SK-N-SH (cell line): ENCODE measurements at regions of chr10 and their contacts with region 1.

Region 1: DNA sequence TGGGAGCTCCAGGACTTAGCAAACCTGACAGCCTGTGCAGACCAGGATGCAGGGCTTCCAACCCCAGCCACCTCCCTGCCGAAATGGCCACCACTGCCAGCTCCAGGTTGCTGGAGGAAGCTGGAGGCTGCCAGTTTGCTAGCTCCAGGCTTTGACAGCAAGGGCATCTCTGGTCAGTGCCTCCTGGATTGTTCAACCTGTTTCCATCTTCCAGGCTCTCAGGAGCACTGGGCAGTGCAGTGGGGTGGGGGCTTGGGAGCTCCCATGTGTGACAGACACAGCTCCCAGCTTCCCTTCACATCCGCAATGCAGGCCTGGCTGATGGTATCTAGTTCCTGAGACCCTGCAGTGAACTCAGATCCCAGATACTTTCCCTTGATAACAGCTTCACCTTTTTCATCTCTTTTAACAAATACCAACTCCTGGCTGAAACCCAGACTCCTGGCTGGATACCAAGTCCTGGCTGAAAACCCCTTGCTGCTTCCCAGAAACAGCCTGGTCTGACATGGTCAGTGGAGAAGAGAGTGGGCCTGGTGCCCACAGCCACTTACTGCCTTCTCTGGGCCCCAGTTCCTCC is 20.8 kb upstream of the RET start:
- DNase-seq: peak; percentile 87
- H3K4me3 ChIP-seq: no peak overlapping the region
- H3K27ac ChIP-seq: peak overlapping the region in 1 of 2 experiments; percentile 100; a peak in 2 of 4 replicates
- H3K4me1 ChIP-seq: peaks cover 0 to 77% of the 10 kb centered on the region in 2 experiments; a peak in 2 of 4 replicates
- H3K27me3 ChIP-seq: no peaks in the 10 kb centered on the region
- CTCF ChIP-seq: no peak
- EP300 ChIP-seq: peak in 1 of 2 experiments; percentile 100; a peak in 2 of 4 replicates
- RAD21 ChIP-seq: peak; percentile 35

Region 2: DNA sequence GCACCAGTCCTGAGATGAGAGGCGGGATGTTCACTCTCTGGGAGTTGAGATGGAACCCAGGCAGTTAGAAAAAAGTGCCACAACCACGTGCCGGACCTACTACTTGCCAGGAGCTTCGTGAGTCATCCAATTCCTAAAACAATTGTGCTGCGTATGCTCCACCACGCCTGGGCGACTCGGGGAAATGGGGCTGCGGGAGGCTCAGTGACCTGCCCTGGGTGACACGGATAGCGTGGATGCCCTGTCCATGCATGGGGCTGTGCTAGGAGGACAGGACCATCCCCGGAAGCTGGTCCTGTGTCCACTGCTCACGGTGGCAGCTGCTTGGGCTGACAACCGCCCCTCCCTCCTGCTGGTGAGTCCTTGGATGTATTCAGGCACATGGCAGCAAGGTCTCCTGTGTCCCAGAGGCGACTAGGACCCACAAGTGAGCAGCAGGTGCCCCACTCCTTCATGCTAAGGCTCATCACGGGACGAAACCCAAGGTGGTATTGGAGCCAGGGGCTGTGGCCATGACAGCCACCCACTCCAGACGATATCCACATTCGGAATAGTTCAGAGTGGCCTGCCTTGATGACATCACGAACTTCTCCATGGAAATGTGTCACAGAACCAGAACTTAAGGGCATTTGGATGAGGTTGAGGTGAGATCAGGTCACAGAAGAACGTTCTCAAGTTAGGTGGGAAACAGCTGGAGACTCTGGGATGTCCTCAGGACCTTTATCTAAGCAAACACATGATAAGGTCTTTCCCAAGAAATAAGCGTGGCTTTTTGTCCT is 183.0 kb before region 1 on chr10:
- CTCF ChIA-PET with region 1: interaction called, 3 read pairs
- POLR2A ChIA-PET with region 1: interaction called, 12 read pairs
- DNase-seq: no peak
- H3K4me3 ChIP-seq: no peak overlapping the region
- H3K27ac ChIP-seq: peak overlapping the region in 1 of 2 experiments; percentile 99; a peak in 2 of 4 replicates
- H3K4me1 ChIP-seq: peaks cover 0 to 90% of the 10 kb centered on the region in 2 experiments; a peak in 2 of 4 replicates
- H3K27me3 ChIP-seq: no peaks in the 10 kb centered on the region
- CTCF ChIP-seq: no peak
- EP300 ChIP-seq: no peak
- RAD21 ChIP-seq: no peak

Region 3: DNA sequence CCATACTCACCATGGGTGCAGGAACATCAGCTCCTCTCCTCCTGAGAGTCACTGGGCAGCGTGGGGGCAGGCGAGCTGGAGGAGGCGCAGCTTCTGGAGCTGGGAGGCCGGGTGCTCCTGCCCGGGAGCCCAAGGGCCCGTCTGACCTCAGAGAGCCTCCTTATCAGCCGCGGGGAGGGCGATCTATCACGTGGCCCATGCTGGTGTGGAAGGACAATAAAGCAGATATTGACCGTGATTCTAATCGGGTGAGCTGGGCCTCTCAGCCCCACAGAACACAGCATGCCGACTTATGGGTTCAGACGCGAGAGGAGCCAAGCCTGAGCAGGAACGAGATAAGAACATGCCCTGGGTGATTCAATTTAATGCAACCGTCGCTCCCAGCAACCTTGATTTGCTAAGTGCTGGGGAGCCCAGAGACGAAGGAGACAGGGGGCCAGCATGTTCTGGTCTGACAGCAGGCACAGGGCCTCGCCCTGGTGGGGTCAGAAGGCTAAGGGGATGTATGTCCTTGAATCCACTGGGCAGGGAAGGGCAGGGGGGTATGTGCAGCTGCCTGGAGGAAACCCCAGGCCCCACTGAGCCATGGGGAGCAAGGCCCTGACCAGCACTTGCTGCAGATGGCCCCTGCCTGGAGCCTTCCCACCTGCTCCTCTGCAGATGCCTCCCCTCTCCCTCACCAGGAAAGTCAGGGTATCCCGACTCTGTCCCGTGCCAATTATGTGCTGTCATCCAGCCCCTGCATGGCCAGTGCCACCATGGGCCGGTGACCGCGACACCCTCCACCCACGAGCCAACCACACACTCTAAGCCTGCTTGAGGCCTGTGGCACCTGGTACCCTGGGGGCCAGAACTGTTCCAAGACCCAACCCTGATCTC is 74.5 kb before region 1 on chr10:
- CTCF ChIA-PET with region 1: interaction called, 11 read pairs
- POLR2A ChIA-PET with region 1: interaction called, 20 read pairs
- DNase-seq: peak; percentile 87
- H3K4me3 ChIP-seq: no peak overlapping the region
- H3K27ac ChIP-seq: peak overlapping the region in 1 of 2 experiments; percentile 93; a peak in 2 of 4 replicates
- H3K4me1 ChIP-seq: peaks cover 0 to 65% of the 10 kb centered on the region in 2 experiments; a peak in 2 of 4 replicates
- H3K27me3 ChIP-seq: no peaks in the 10 kb centered on the region
- CTCF ChIP-seq: no peak
- EP300 ChIP-seq: peak in 1 of 2 experiments; percentile 95; a peak in 2 of 4 replicates
- RAD21 ChIP-seq: peak; percentile 21

Region 4: GRCh38 chr10:42987121-42987541 is 68.9 kb before region 1 on chr10:
- CTCF ChIA-PET with region 1: interaction called, 11 read pairs
- POLR2A ChIA-PET with region 1: interaction called, 14 read pairs
- DNase-seq: no peak
- H3K4me3 ChIP-seq: no peak overlapping the region
- H3K27ac ChIP-seq: no peak overlapping the region; a peak in 1 of 4 replicates
- H3K4me1 ChIP-seq: peaks cover 0 to 71% of the 10 kb centered on the region in 2 experiments; a peak in 1 of 4 replicates
- H3K27me3 ChIP-seq: no peaks in the 10 kb centered on the region
- CTCF ChIP-seq: no peak
- EP300 ChIP-seq: no peak
- RAD21 ChIP-seq: no peak

Region 5: DNA sequence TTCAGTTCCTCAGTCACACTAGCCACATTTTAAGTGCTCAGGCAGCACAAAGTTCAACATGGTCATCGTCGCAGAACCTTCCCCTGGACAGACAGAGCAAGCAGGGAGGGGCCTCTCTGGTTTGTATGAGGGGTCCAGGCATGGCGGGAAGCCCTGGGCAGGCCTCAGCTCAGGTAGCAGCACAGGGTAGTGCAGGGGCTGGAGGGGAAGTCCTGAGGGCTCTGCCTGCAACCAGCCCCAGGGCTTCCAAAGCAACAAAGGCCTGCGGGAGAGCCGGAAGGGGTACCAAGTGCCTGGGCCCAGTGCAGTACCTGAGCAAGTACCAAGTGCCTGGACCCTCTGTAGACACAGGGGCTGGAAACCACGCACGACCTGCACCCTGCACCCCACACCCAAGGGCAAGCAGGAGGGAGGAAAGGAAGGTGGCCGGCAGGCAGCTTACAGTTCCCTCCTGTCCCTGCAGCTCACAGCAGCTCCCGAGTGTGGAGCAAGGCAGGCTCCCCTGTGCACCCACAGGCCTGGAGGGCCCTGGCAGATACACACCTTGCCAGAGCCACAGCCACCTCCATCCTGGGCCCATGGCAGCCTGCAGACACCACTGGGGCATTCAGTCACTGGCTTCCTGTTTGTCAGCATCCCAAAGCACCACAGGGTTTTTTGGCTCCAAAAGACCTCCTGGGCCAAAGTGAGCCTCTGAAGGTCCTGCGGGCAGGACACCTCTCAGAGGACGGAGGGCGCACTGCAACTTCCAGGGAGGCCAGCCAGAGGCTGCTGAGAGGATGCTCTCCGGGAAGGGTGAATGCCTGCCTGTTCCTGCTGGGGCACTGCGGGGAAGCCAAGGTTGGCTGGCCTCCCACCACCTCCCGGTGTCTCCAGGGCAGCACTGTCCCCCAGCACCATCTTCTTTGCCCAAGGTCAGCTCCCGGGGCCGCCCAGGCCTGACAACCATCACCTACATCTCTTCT is 14.3 kb after region 1 on chr10:
- CTCF ChIA-PET with region 1: interaction called, 19 read pairs
- POLR2A ChIA-PET with region 1: interaction called, 28 read pairs
- DNase-seq: no peak
- H3K4me3 ChIP-seq: no peak overlapping the region
- H3K27ac ChIP-seq: peak overlapping the region in 1 of 2 experiments; percentile 88; a peak in 2 of 4 replicates
- H3K4me1 ChIP-seq: peaks cover 0 to 80% of the 10 kb centered on the region in 2 experiments; a peak in 1 of 4 replicates
- H3K27me3 ChIP-seq: no peaks in the 10 kb centered on the region
- CTCF ChIP-seq: no peak
- EP300 ChIP-seq: no peak
- RAD21 ChIP-seq: peak; percentile 8; the same call in 1 of the 2 replicates